MCF 10A (cell line): ENCODE measurements at regions of chr14 and their contacts with region 1.

Region 1: GRCh38 chr14:20970983-20971704 is 15.9 kb downstream of the RNASE2 start:
- DNase-seq: peak; percentile 78
- H3K4me3 Mint-ChIP-seq: peak overlapping the region; percentile 84
- H3K27ac Mint-ChIP-seq: peak overlapping the region; percentile 27
- H3K4me1 Mint-ChIP-seq: peaks cover 16% of the 10 kb centered on the region
- H3K27me3 Mint-ChIP-seq: peaks cover 8% of the 10 kb centered on the region
- CTCF ChIP-seq: peak; percentile 75

Region 2: GRCh38 chr14:20690848-20691523 is 280.2 kb before region 1 on chr14:
- CTCF ChIA-PET with region 1: interaction called, 20 read pairs
- POLR2A ChIA-PET with region 1: interaction called, 3 read pairs
- intact Hi-C with region 1: no loop called
- DNase-seq: peak; percentile 77
- H3K4me3 Mint-ChIP-seq: peak overlapping the region; percentile 47
- H3K27ac Mint-ChIP-seq: no peak overlapping the region
- H3K4me1 Mint-ChIP-seq: peaks cover 10% of the 10 kb centered on the region
- H3K27me3 Mint-ChIP-seq: no peaks in the 10 kb centered on the region
- CTCF ChIP-seq: peak; percentile 81

Region 3: GRCh38 chr14:20848316-20848954 is 122.7 kb before region 1 on chr14:
- CTCF ChIA-PET with region 1: interaction called, 14 read pairs
- POLR2A ChIA-PET with region 1: interaction called, 4 read pairs
- intact Hi-C with region 1: no loop called
- DNase-seq: peak; percentile 47
- H3K4me3 Mint-ChIP-seq: no peak overlapping the region
- H3K27ac Mint-ChIP-seq: peak overlapping the region; percentile 16
- H3K4me1 Mint-ChIP-seq: peaks cover 13% of the 10 kb centered on the region
- H3K27me3 Mint-ChIP-seq: peaks cover 48% of the 10 kb centered on the region
- CTCF ChIP-seq: no peak

Region 4: DNA sequence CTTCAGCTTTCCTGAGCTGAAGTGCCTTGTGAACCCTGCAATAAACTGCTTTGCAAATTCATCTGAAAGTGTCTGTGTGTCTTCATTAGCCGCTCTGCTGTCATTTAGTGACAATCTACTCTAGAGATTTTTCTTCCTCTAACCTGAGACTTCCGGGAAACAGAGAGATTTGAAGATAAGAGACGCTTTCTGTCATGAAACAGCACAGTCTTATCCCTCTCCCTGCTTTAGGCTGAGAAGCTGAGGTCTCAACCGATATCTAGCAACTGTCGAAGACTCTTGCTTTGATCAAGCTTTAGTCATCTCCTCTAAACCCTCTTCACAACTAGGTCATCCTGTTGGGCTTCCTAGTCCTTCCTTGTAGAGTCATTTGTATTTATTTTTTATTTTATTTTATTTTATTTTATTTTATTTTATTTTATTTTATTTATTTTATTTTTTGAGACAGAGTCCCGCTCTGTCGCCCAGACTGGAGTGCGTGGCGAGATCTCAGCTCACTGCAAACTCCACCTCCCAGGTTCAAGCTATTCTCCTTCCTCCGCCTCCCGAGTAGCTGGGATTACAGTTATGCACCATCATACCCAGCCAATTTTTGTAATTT is 14.7 kb before region 1 on chr14:
- CTCF ChIA-PET with region 1: interaction called, 38 read pairs
- POLR2A ChIA-PET with region 1: interaction called, 8 read pairs
- intact Hi-C with region 1: no loop called
- DNase-seq: no peak
- H3K4me3 Mint-ChIP-seq: no peak overlapping the region
- H3K27ac Mint-ChIP-seq: no peak overlapping the region
- H3K4me1 Mint-ChIP-seq: peaks cover 12% of the 10 kb centered on the region
- H3K27me3 Mint-ChIP-seq: peaks cover 64% of the 10 kb centered on the region
- CTCF ChIP-seq: no peak

Region 5: DNA sequence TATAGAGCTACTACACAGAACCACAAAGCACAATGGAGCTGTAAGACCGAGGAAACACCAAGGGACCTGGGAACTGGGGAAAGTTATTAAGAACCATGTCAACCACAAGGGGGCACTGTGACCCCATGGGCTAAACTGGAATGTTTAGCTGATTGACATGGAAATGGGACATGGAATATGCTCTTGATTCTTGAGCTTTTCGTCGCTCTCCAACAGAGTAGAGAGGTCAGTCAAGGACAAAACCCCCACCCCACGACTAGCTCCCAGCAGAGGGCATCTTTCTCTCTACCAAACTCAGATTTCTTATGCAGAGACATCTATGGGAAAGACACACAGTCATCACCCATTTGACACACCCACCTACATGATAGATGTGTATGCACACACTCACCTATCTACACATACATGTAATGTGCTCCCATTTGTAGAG is 43.6 kb after region 1 on chr14:
- CTCF ChIA-PET with region 1: interaction called, 33 read pairs
- POLR2A ChIA-PET with region 1: no interaction called
- intact Hi-C with region 1: no loop called
- DNase-seq: peak; percentile 88
- H3K4me3 Mint-ChIP-seq: no peak overlapping the region
- H3K27ac Mint-ChIP-seq: no peak overlapping the region
- H3K4me1 Mint-ChIP-seq: peaks cover 7% of the 10 kb centered on the region
- H3K27me3 Mint-ChIP-seq: peaks cover 33% of the 10 kb centered on the region
- CTCF ChIP-seq: peak; percentile 90

Region 6: GRCh38 chr14:21103710-21104447 is 132.7 kb after region 1 on chr14:
- CTCF ChIA-PET with region 1: interaction called, 13 read pairs
- POLR2A ChIA-PET with region 1: interaction called, 4 read pairs
- intact Hi-C with region 1: no loop called
- DNase-seq: peak; percentile 98
- H3K4me3 Mint-ChIP-seq: peak overlapping the region; percentile 84
- H3K27ac Mint-ChIP-seq: peak overlapping the region; percentile 67
- H3K4me1 Mint-ChIP-seq: peaks cover 52% of the 10 kb centered on the region
- H3K27me3 Mint-ChIP-seq: no peaks in the 10 kb centered on the region
- CTCF ChIP-seq: peak; percentile 58

Region 7: GRCh38 chr14:21185491-21185890 is 214.3 kb after region 1 on chr14:
- CTCF ChIA-PET with region 1: no interaction called
- POLR2A ChIA-PET with region 1: no interaction called
- intact Hi-C with region 1: no loop called
- DNase-seq: no peak
- H3K4me3 Mint-ChIP-seq: no peak overlapping the region
- H3K27ac Mint-ChIP-seq: no peak overlapping the region
- H3K4me1 Mint-ChIP-seq: peaks cover 6% of the 10 kb centered on the region
- H3K27me3 Mint-ChIP-seq: peaks cover 34% of the 10 kb centered on the region
- CTCF ChIP-seq: no peak